ENCODE measurements at regions of chr6 and their contacts with region 1.

Region 1: GRCh38 chr6:148166339-148166968 is 176.2 kb upstream of the SASH1 start:
- DNase-seq: no peak
- H3K4me3 ChIP-seq: no peak overlapping the region
- H3K27ac ChIP-seq: no peak overlapping the region
- H3K4me1 ChIP-seq: no peaks in the 10 kb centered on the region
- H3K27me3 ChIP-seq: no peaks in the 10 kb centered on the region
- CTCF ChIP-seq: peak; percentile 43 to 86 (median 67)
- POLR2A ChIP-seq: no peak

Region 2: DNA sequence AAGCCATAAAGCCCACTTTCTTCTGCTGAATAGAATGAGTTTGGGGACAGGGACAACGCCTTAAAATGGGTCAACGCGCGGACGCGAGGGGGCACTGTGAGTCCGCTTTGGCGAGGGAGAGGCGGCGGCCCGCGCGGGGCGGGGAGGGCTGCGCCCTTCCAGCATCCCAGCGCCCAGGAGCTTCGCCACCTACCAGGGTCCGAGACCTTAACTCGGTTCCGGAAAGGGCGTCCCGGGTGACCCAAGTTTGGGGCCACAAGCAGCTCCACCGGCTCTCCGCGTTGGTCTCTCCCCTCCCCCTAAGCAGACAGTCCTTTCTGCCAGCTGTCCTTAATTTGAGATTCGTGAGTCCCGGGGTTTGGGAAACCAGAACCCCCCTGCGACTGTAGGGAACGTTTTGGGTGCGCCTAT is 659.7 kb before region 1 on chr6:
- intact Hi-C with region 1: loop called (anchors 5 kb)
- DNase-seq: peak; percentile 70 to 78
- H3K4me3 ChIP-seq: peak overlapping the region in 1 of 3 donors; percentile 57
- H3K27ac ChIP-seq: no peak overlapping the region
- H3K4me1 ChIP-seq: peaks cover 9 to 15% of the 10 kb centered on the region in 2 donors
- H3K27me3 ChIP-seq: no peaks in the 10 kb centered on the region
- CTCF ChIP-seq: peak; percentile 32 to 85 (median 66)
- POLR2A ChIP-seq: no peak

Region 3: GRCh38 chr6:148273962-148274752 is 107.7 kb after region 1 on chr6:
- intact Hi-C with region 1: no loop called
- DNase-seq: peak; percentile 59 to 64
- H3K4me3 ChIP-seq: no peak overlapping the region
- H3K27ac ChIP-seq: peak overlapping the region; percentile 4 to 74 (median 55)
- H3K4me1 ChIP-seq: peaks cover 17 to 21% of the 10 kb centered on the region in 2 donors
- H3K27me3 ChIP-seq: no peaks in the 10 kb centered on the region
- CTCF ChIP-seq: no peak
- POLR2A ChIP-seq: no peak

Measured in thyroid gland (tissue), 4 donors.